Activated CD4-positive, alpha-beta memory T cell treated with anti-CD3 and anti-CD28 coated beads for 36 hours (primary cell): ENCODE measurements at regions of chr7 and their contacts with region 1.

Region 1: GRCh38 chr7:129343099-129343700 is 91.0 kb upstream of the STRIP2 start:
- DNase-seq: no peak
- H3K4me3 Mint-ChIP-seq: no peak overlapping the region
- H3K27ac Mint-ChIP-seq: no peak overlapping the region
- H3K4me1 Mint-ChIP-seq: peaks cover 30% of the 10 kb centered on the region
- H3K27me3 Mint-ChIP-seq: no peaks in the 10 kb centered on the region

Region 2: GRCh38 chr7:129332284-129333035 is 10.7 kb before region 1 on chr7:
- CTCF ChIA-PET with region 1: interaction called, 22 read pairs
- POLR2A ChIA-PET with region 1: interaction called, 4 read pairs
- intact Hi-C with region 1: no loop called
- DNase-seq: no peak
- H3K4me3 Mint-ChIP-seq: no peak overlapping the region
- H3K27ac Mint-ChIP-seq: no peak overlapping the region
- H3K4me1 Mint-ChIP-seq: peaks cover 4% of the 10 kb centered on the region
- H3K27me3 Mint-ChIP-seq: no peaks in the 10 kb centered on the region

Region 3: GRCh38 chr7:129356176-129356575 is 13.0 kb after region 1 on chr7:
- CTCF ChIA-PET with region 1: interaction called, 15 read pairs
- POLR2A ChIA-PET with region 1: no interaction called
- intact Hi-C with region 1: no loop called
- DNase-seq: no peak
- H3K4me3 Mint-ChIP-seq: no peak overlapping the region
- H3K27ac Mint-ChIP-seq: no peak overlapping the region
- H3K4me1 Mint-ChIP-seq: peaks cover 6% of the 10 kb centered on the region
- H3K27me3 Mint-ChIP-seq: no peaks in the 10 kb centered on the region

Region 4: GRCh38 chr7:129376076-129376777 is 33.0 kb after region 1 on chr7:
- CTCF ChIA-PET with region 1: interaction called, 40 read pairs
- POLR2A ChIA-PET with region 1: no interaction called
- intact Hi-C with region 1: loop called (anchors 1 kb)
- DNase-seq: peak; percentile 68
- H3K4me3 Mint-ChIP-seq: no peak overlapping the region
- H3K27ac Mint-ChIP-seq: no peak overlapping the region
- H3K4me1 Mint-ChIP-seq: peaks cover 25% of the 10 kb centered on the region
- H3K27me3 Mint-ChIP-seq: no peaks in the 10 kb centered on the region

Region 5: DNA sequence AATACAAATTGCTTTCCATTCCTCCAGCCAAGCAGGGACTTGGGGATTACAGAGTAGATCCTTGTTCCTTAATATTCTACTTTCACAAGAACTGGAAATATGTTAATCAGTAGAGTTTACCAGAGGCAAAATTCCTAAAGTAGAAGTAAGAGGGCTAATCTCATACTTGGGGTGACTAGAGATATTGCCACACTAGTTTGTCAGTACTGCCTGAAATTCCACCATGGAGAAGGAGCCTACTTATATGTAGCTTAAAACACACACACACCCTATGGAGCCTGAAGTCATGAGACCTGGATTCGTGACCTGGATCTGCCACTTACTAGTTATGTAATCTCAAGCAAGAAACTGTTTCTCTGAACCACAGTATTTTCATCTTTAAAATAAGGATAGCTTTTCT is 124.9 kb after region 1 on chr7:
- CTCF ChIA-PET with region 1: interaction called, 33 read pairs
- POLR2A ChIA-PET with region 1: no interaction called
- intact Hi-C with region 1: loop called (anchors 1 kb)
- DNase-seq: no peak
- H3K4me3 Mint-ChIP-seq: no peak overlapping the region
- H3K27ac Mint-ChIP-seq: no peak overlapping the region
- H3K4me1 Mint-ChIP-seq: peaks cover 13% of the 10 kb centered on the region
- H3K27me3 Mint-ChIP-seq: no peaks in the 10 kb centered on the region

Region 6: GRCh38 chr7:129635300-129636029 is 292.3 kb after region 1 on chr7:
- CTCF ChIA-PET with region 1: interaction called, 7 read pairs
- POLR2A ChIA-PET with region 1: no interaction called
- intact Hi-C with region 1: loop called (anchors 10 kb)
- DNase-seq: peak; percentile 81
- H3K4me3 Mint-ChIP-seq: no peak overlapping the region
- H3K27ac Mint-ChIP-seq: peak overlapping the region; percentile 16
- H3K4me1 Mint-ChIP-seq: peaks cover 36% of the 10 kb centered on the region
- H3K27me3 Mint-ChIP-seq: no peaks in the 10 kb centered on the region

Region 7: DNA sequence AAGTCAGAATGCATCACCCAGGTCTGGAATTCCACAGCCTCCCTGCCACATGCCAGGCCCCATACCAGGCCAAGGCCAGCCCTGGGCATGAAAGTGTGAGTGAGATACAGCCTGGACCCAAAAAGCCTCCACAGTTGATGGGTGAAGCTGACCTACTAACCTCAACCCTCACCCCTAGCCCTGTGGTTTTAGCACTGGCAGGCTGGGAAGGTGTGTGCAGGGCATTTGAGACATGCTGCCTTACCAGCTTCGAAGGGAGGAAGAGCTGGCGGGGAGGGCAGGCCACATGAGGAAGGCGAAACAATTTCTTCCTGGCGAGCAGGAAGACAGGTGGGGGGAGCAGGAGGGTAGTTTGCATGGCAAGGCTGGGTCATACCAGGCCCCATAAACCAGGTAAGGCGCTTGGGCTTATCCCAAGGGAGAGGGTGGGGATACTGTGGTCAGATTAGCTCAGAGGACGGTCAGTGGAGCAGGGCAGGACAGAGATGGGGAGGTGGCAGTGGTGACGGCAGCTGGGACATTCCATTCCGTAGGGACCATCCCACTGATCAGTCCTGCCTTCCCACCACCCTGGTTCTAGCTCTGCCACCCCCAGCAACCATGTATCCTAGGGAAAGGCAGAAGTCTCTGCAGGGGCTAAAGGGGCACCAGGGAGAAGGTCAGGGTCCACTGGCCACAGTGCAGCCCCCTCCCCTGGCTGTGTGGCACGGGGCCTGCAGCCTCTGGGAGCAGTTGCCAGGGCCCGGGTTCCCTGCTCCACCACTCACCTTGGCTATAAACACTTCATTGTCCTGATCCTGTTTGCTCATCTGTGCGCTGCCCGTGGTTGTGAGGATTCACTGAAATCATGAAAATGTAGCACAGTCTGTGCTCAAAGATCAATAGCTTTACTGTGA is 424.2 kb after region 1 on chr7:
- CTCF ChIA-PET with region 1: no interaction called
- POLR2A ChIA-PET with region 1: no interaction called
- intact Hi-C with region 1: no loop called
- DNase-seq: no peak
- H3K4me3 Mint-ChIP-seq: no peak overlapping the region
- H3K27ac Mint-ChIP-seq: no peak overlapping the region
- H3K4me1 Mint-ChIP-seq: no peaks in the 10 kb centered on the region
- H3K27me3 Mint-ChIP-seq: no peaks in the 10 kb centered on the region

Region 8: GRCh38 chr7:130010689-130011412 is 667.7 kb after region 1 on chr7:
- CTCF ChIA-PET with region 1: interaction called, 4 read pairs
- POLR2A ChIA-PET with region 1: no interaction called
- intact Hi-C with region 1: loop called (anchors 10 kb)
- DNase-seq: peak; percentile 94
- H3K4me3 Mint-ChIP-seq: no peak overlapping the region
- H3K27ac Mint-ChIP-seq: peak overlapping the region; percentile 70
- H3K4me1 Mint-ChIP-seq: peaks cover 12% of the 10 kb centered on the region
- H3K27me3 Mint-ChIP-seq: no peaks in the 10 kb centered on the region